ENCODE measurements at regions of chr18 and their contacts with region 1.

Region 1: GRCh38 chr18:36572135-36572856 is 256.5 kb downstream of the TPGS2 start:
- DNase-seq: peak; percentile 44
- H3K4me3 ChIP-seq: no peak overlapping the region
- H3K27ac ChIP-seq: no peak overlapping the region
- H3K4me1 ChIP-seq: no peaks in the 10 kb centered on the region
- H3K27me3 ChIP-seq: peaks cover 2 to 4% of the 10 kb centered on the region in 2 experiments
- CTCF ChIP-seq: peak; percentile 39 to 43
- POLR2A ChIP-seq: no peak

Region 2: GRCh38 chr18:36638224-36638623 is 65.9 kb after region 1 on chr18:
- CTCF ChIA-PET with region 1: no interaction called
- POLR2A ChIA-PET with region 1: no interaction called
- dilution Hi-C with region 1: no loop called
- intact Hi-C with region 1: loop called (anchors 10 kb)
- DNase-seq: no peak
- H3K4me3 ChIP-seq: no peak overlapping the region
- H3K27ac ChIP-seq: no peak overlapping the region
- H3K4me1 ChIP-seq: no peaks in the 10 kb centered on the region
- H3K27me3 ChIP-seq: no peaks in the 10 kb centered on the region
- CTCF ChIP-seq: no peak
- POLR2A ChIP-seq: no peak